ENCODE measurements at regions of chr1 and their contacts with region 1.

Region 1: DNA sequence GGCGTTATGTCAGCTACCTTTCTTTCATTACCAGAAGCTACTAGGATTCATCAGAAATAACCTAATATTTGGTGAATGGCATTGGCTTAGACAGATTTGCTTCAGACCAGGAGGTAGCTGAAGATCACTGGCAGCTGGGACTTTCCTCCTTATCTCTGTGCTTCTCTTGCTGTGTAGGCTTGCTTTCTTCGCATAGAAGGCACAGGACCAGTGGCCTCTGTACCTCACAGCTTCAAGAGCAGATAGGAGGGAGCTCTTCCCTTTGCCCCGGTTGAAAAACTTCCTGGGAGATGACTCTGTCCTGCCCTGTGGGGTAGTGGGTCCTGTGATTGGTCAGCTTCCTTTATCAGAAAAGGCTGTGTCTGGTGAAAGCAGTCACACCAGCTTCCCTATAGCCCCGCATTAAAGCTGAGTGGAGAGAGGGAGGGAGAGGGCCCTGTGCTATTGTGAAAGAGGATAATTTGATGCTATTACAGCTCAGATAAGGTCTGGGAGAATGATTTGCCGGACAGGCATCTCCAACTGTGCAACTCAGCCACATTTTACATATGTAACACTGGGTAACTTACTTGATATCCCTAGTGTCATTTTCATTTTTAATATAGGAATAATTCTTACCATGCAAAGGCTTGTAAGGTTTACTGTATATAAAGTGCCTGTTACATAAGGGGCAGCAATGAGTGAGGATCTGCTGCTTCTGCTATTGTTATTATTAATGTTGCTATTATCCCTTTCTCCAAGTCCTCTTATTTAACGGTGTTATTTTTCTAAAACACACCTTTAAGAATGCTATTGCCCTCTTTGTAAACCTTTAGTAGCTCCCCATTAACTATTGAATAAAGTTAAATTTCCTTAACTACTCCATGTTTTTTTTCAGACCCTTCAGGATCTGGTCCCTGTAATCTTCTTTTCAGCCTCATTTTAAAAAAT is 31.6 kb downstream of the OSBPL9 start:
- DNase-seq: peak in 1 of 3 donors; percentile 35
- ATAC-seq: peak; percentile 80 to 86
- H3K4me3 ChIP-seq: no peak overlapping the region
- H3K27ac ChIP-seq: peak overlapping the region; percentile 85
- H3K4me1 ChIP-seq: peaks cover 20% of the 10 kb centered on the region
- H3K27me3 ChIP-seq: no peaks in the 10 kb centered on the region

Region 2: DNA sequence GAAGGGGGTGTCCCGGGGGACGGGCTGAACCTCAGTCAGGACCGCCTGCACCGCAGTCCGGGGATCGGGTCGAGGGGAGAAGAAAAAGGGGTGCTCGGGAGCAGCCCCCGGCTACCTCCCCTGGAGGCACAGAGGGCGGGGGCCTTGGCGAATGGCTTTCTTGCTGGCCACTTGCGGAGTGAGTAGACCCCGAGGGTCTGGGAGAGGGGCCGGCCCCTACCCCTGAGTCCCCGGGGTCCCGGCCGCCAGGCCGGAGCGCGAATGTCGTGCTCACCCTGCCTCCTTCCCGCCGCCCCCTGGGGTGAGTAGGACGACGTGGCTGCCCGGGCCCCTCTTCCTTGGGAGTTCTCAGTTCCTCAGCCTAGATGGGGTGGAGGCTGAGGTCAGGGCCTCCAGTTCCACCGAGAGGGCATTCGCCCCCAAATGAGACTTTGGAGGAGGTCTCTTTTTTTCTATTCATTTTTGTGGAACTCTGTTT is 81.4 kb after region 1 on chr1:
- intact Hi-C with region 1: loop called in 1 of 4 experiments (anchors 10 kb)
- DNase-seq: peak in 1 of 3 donors; percentile 65
- ATAC-seq: peak; percentile 41 to 57
- H3K4me3 ChIP-seq: peak overlapping the region; percentile 84
- H3K27ac ChIP-seq: peak overlapping the region; percentile 61
- H3K4me1 ChIP-seq: peaks cover 5% of the 10 kb centered on the region
- H3K27me3 ChIP-seq: no peaks in the 10 kb centered on the region

Region 3: DNA sequence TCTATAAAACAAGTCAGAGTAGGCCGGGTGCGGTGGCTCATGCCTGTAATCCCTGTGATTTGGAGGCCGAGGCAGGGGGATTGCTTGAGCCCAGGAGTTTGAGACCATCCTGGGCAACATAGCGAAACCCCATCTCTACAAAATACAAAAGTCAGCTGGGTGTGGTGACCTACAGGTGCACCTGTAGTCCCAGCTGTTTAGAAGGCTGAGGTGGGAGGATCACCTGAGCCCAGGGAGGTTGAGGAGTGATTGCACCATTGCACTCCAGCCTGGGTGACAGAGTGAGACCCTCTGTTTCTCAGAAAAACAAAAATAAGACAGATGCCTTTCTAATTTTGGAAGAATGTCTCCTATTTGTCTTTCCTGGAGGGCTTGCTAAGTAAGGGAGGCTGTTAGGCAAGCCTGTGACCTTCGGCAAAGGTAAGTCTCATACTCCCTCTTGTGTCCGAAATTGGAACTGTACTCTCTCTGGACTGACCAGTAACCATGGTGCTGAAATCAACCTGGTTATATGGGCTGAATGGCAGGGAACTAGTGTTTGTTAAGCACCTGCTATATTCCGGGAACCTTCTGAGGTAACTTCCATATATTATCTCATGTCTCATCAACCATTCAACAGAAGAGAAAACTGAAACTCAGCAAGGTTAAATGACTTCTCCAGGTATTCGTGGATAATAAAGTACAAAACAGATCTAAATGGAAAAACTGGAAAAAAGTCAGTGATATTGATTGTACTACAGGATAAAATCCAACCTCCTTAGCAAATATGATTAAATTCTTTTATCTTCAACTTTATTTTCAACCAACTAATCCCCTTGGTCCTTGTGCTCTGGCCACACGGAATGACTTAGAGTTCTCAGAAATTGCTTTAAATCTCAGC is 353.8 kb after region 1 on chr1:
- intact Hi-C with region 1: no loop called
- DNase-seq: no peak
- ATAC-seq: peak; percentile 88 to 91
- H3K4me3 ChIP-seq: no peak overlapping the region
- H3K27ac ChIP-seq: no peak overlapping the region
- H3K4me1 ChIP-seq: no peaks in the 10 kb centered on the region
- H3K27me3 ChIP-seq: no peaks in the 10 kb centered on the region

Region 4: DNA sequence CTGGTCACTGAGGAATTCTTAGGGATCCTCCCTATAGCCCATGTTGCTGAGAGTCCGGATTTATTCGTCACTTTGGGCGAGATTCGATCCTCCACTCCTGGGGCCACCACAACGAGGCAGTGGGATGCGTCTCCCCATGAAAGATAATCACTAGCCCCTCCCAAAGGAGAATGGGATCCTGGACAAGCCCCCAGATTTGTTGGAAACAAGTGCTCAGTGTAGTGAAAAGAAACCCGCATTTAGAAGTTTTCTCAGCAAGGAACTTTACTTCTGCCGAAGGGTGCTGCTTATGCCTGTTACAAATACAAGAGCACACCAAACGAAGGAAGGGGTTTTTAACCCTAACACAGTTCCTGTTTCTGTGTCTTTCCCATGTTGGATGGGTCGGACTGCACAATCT is 576.7 kb after region 1 on chr1:
- intact Hi-C with region 1: no loop called
- DNase-seq: no peak
- ATAC-seq: no peak
- H3K4me3 ChIP-seq: no peak overlapping the region
- H3K27ac ChIP-seq: no peak overlapping the region
- H3K4me1 ChIP-seq: no peaks in the 10 kb centered on the region
- H3K27me3 ChIP-seq: no peaks in the 10 kb centered on the region

Measured in right cardiac atrium (tissue), 5 donors.